Activated CD8-positive, alpha-beta memory T cell treated with anti-CD3 and anti-CD28 coated beads, Interleukin-2, amount 10 ng/mL, durations not matched to agents 7 days and 5 days (primary cell): ENCODE measurements at regions of chr14 and their contacts with region 1.

Region 1: GRCh38 chr14:75307700-75308379 is 29.2 kb downstream of the FOS start:
- DNase-seq: peak; percentile 77
- ATAC-seq: peak; percentile 59
- H3K4me3 Mint-ChIP-seq: no peak overlapping the region
- H3K27ac Mint-ChIP-seq: no peak overlapping the region
- H3K4me1 Mint-ChIP-seq: peaks cover 37% of the 10 kb centered on the region
- H3K27me3 Mint-ChIP-seq: peaks cover 3% of the 10 kb centered on the region

Region 2: DNA sequence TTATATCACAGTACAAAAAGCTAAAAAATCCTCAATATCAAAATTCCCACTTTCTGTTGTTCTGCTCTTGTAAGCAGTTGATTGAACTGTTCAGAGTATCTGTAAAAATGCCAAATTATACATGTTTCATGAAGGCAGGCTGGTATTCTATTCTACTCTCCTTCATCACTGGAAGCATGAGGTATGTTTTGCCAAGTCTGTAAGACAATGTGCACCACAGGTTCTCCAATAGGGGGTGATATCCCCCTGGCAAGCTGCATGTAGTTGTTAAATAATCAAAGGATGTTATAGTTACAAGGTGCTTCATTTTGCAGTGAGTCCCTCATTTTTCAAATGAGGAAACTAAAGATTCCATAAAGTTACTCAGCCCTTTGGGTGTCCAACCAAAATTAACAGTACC is 165.9 kb before region 1 on chr14:
- CTCF ChIA-PET with region 1: interaction called, 138 read pairs
- DNase-seq: peak; percentile 47
- ATAC-seq: peak; percentile 52
- H3K4me3 Mint-ChIP-seq: no peak overlapping the region
- H3K27ac Mint-ChIP-seq: peak overlapping the region; percentile 20
- H3K4me1 Mint-ChIP-seq: peaks cover 62% of the 10 kb centered on the region
- H3K27me3 Mint-ChIP-seq: no peaks in the 10 kb centered on the region

Region 3: GRCh38 chr14:75452900-75453747 is 145.3 kb after region 1 on chr14:
- CTCF ChIA-PET with region 1: interaction called, 17 read pairs
- DNase-seq: no peak
- ATAC-seq: no peak
- H3K4me3 Mint-ChIP-seq: no peak overlapping the region
- H3K27ac Mint-ChIP-seq: no peak overlapping the region
- H3K4me1 Mint-ChIP-seq: peaks cover 11% of the 10 kb centered on the region
- H3K27me3 Mint-ChIP-seq: peaks cover 12% of the 10 kb centered on the region

Region 4: GRCh38 chr14:75497191-75497590 is 189.4 kb after region 1 on chr14:
- CTCF ChIA-PET with region 1: interaction called, 157 read pairs
- DNase-seq: peak; percentile 84
- ATAC-seq: peak; percentile 73
- H3K4me3 Mint-ChIP-seq: peak overlapping the region; percentile 63
- H3K27ac Mint-ChIP-seq: peak overlapping the region; percentile 93
- H3K4me1 Mint-ChIP-seq: peaks cover 74% of the 10 kb centered on the region
- H3K27me3 Mint-ChIP-seq: no peaks in the 10 kb centered on the region

Region 5: DNA sequence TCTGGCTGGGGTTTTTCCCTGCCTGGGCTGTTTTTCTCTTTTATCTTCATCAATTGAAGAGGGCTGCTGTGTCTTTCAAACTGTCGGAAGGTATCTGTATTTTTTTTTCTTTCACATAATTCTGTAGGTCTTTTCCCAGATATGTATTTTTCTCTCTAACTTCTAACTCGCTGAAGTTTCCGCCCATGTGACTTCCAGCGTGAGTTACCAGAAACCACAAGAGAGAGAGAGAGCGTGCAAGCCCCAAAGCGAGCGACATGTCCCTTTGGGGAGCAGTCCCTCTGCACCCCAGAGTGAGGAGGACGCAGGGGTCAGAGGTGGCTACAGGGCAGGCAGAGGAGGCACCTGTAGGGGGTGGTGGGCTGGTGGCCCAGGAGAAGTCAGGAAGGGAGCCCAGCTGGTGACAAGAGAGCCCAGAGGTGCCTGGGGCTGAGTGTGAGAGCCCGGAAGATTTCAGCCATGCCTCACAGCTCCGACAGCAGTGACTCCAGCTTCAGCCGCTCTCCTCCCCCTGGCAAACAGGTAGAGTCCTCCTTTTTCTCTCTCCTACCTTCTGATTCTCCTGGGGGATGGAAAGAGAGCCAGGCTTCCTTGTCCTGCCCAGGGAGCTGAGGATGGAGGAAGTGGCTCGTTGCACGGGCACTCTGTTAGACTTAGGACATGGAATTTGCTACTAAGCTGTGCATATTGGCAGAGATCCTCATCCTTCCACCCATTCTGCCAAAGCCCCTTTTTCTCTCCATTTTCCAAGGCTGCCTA is 214.6 kb after region 1 on chr14 and contains the start of gene BATF:
- CTCF ChIA-PET with region 1: interaction called, 10 read pairs
- DNase-seq: peak; percentile 92
- ATAC-seq: peak; percentile 71
- H3K4me3 Mint-ChIP-seq: peak within 1 kb of the TSS; percentile 99
- H3K27ac Mint-ChIP-seq: peak within 1 kb of the TSS; percentile 97
- H3K4me1 Mint-ChIP-seq: peaks cover 73% of the 10 kb centered on the region
- H3K27me3 Mint-ChIP-seq: no peaks in the 10 kb centered on the region
- total RNA-seq, gene BATF: 74.6 to 81.3 TPM